ENCODE measurements at regions of chr12 and their contacts with region 1.

Region 1: GRCh38 chr12:56636675-56637540 is 6.8 kb upstream of the BAZ2A start:
- DNase-seq: peak; percentile 99
- H3K4me3 ChIP-seq: peak overlapping the region; percentile 68 to 85
- H3K27ac ChIP-seq: peak overlapping the region; percentile 98
- H3K4me1 ChIP-seq: peaks cover 17% of the 10 kb centered on the region
- H3K27me3 ChIP-seq: no peaks in the 10 kb centered on the region
- CTCF ChIP-seq: peak; percentile 33 to 77 (median 68)
- POLR2A ChIP-seq: peak; percentile 76

Region 2: DNA sequence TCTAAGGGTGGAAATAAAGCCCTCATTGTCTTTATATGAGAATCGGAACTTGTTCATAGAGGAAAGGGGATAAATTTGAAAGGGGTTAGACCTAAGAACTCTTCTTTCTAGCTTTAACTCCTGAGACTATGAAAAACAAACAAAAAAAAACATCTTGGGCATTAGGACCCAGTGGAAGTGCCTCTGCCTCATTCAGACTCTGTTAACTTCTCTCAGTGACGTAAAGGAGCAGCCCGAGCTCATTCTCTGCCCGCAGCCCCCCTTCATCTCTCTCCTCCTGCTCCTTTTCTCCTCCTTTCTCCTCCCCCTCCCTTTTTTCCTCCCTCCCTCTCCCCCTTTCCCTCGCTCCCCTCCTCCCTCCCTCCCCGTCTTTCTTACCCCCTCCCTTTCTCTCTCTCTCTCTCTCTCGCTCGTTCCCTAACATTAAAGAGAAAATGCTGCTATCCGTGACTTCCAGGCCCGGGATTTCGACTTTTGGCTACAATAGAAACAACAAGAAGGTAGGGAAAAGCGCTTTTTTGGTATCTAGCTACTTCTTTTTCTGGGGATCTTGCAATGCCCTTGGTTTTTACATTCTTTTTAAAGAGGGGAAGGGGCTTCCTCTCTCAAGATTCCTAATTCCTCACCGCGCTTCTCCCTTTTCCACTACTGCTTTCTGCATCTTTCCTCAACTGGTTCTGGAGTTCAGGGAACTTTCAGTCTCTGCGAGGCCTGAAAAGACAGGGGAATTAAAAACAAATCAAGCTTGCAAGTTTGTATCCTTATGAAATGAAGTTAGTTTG is 115.1 kb before region 1 on chr12 and contains the start of gene RBMS2:
- intact Hi-C with region 1: loop called (anchors 5 kb)
- DNase-seq: peak; percentile 86
- H3K4me3 ChIP-seq: peak within 1 kb of the TSS; percentile 43 to 46
- H3K27ac ChIP-seq: peak within 1 kb of the TSS; percentile 91 to 92
- H3K4me1 ChIP-seq: peaks cover 4% of the 10 kb centered on the region
- H3K27me3 ChIP-seq: no peaks in the 10 kb centered on the region
- CTCF ChIP-seq: no peak
- POLR2A ChIP-seq: no peak
- total RNA-seq, gene RBMS2: 21.1 to 259 TPM

Region 3: DNA sequence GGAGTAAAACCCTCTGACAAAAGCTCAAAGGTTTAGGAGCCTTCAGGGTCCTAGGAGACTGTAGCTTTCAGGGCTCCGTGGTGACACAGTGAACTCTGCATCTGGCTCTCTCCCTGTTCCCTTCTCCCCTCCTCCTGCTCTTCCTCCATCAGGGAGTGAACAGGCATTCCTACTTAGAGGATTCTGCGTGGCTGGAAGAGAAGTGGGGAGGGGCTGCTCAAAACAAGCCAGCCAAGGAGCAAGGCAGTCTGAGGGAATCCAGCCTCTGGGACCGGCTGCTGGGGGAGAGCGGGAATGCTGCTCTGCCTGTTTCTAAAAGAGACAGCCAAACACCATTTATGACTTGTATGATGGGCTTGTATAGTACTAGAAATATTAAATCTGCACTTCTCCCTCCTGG is 65.8 kb before region 1 on chr12:
- intact Hi-C with region 1: loop called (anchors 5 kb)
- DNase-seq: no peak
- H3K4me3 ChIP-seq: no peak overlapping the region
- H3K27ac ChIP-seq: no peak overlapping the region
- H3K4me1 ChIP-seq: no peaks in the 10 kb centered on the region
- H3K27me3 ChIP-seq: no peaks in the 10 kb centered on the region
- CTCF ChIP-seq: no peak
- POLR2A ChIP-seq: no peak

Region 4: GRCh38 chr12:56724972-56725722 is 88.2 kb after region 1 on chr12 and contains the start of gene NACA:
- intact Hi-C with region 1: loop called (anchors 10 kb)
- DNase-seq: peak; percentile 99
- H3K4me3 ChIP-seq: peak within 1 kb of the TSS; percentile 69 to 75
- H3K27ac ChIP-seq: peak within 1 kb of the TSS; percentile 94 to 96
- H3K4me1 ChIP-seq: peaks cover 19% of the 10 kb centered on the region
- H3K27me3 ChIP-seq: no peaks in the 10 kb centered on the region
- CTCF ChIP-seq: no peak
- POLR2A ChIP-seq: peak; percentile 97
- total RNA-seq, gene NACA: 912 to 1,347 TPM

Region 5: DNA sequence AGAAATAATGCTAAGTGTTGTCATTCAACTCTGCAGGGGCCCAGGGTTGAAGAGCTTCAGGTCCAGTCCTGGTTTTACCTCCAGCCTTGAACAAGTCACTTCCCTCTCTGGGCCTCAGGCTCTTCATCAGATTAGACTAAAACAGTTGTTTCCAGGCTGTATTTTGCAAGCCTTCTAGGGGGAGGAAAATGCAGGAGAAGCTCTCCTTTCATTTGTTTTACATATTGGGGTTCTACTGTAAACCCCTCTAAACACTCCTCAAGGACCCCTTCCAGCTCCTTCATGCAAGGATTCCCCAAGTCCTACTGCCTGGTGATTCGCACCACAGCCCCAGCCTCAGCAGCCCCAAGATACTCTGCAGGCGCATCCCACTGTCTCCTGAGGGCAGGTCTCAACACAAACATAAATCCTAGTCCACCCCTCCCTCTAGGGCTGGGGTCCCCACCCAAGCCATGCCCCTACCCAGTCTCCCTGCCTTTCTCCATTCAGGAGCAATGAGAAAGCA is 294.6 kb after region 1 on chr12:
- intact Hi-C with region 1: no loop called
- DNase-seq: no peak
- H3K4me3 ChIP-seq: no peak overlapping the region
- H3K27ac ChIP-seq: no peak overlapping the region
- H3K4me1 ChIP-seq: no peaks in the 10 kb centered on the region
- H3K27me3 ChIP-seq: no peaks in the 10 kb centered on the region
- CTCF ChIP-seq: no peak
- POLR2A ChIP-seq: no peak

Region 6: GRCh38 chr12:57088459-57089248 is 451.7 kb after region 1 on chr12 and contains the start of gene NAB2:
- intact Hi-C with region 1: loop called (anchors 10 kb)
- DNase-seq: peak; percentile 97
- H3K4me3 ChIP-seq: peak within 1 kb of the TSS; percentile 82 to 91
- H3K27ac ChIP-seq: peak within 1 kb of the TSS; percentile 99
- H3K4me1 ChIP-seq: peaks cover 34% of the 10 kb centered on the region
- H3K27me3 ChIP-seq: no peaks in the 10 kb centered on the region
- CTCF ChIP-seq: peak in 1 of 4 experiments; percentile 15
- POLR2A ChIP-seq: peak; percentile 85
- total RNA-seq, gene NAB2: 19.0 to 65.5 TPM

Measured in prostate gland (tissue), 2 donors.